Calu3 (cell line): ENCODE measurements at regions of chrX and their contacts with region 1.

Region 1: DNA sequence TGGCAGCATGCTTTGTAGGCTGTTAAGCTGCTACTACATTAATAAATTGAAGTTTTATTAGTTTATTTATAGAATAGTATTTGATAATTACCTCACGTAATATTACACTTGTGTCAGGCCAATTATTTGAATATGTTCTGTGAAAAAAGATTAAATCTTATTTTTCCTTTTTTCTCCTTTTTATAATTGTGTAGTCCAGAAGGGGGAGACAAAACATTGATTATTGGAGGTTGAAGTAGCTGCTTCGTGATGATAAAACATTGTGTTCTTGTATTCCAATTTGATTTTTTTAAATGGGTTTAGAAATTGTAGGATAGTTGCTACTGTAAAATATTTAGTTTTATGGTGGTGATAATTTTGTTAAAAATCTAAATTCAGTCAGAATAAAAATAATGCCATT is 85.7 kb downstream of the DIAPH2 start:
- DNase-seq: no peak
- H3K4me3 Mint-ChIP-seq: no peak overlapping the region
- H3K27ac Mint-ChIP-seq: no peak overlapping the region
- H3K4me1 Mint-ChIP-seq: no peaks in the 10 kb centered on the region
- H3K27me3 Mint-ChIP-seq: no peaks in the 10 kb centered on the region
- CTCF ChIP-seq: peak; percentile 16

Region 2: DNA sequence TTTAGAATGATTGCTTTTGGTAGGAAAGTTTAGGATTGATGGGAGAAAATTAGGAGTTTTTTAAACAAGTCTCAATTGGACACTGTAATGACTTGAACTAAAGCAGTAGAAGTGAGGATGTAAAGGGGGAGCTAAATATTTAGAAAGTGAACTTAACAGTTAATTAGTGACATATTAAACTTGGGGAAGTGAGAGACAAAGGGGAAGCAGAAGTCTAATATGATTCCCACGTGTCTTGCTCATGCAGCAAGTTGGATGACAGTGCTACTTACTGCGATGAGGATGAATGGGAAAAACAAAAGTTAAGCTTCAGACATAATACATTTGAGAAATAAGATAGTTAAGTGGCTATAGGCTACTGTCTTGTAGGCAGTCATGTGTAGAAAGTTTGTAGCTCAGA is 223.8 kb after region 1 on chrX:
- CTCF ChIA-PET with region 1: no interaction called
- intact Hi-C with region 1: loop called (anchors 10 kb)
- DNase-seq: no peak
- H3K4me3 Mint-ChIP-seq: no peak overlapping the region
- H3K27ac Mint-ChIP-seq: no peak overlapping the region
- H3K4me1 Mint-ChIP-seq: peaks cover 19% of the 10 kb centered on the region
- H3K27me3 Mint-ChIP-seq: no peaks in the 10 kb centered on the region
- CTCF ChIP-seq: no peak

Region 3: GRCh38 chrX:97016106-97016505 is 245.8 kb after region 1 on chrX:
- CTCF ChIA-PET with region 1: no interaction called
- intact Hi-C with region 1: loop called (anchors 5 kb)
- DNase-seq: no peak
- H3K4me3 Mint-ChIP-seq: no peak overlapping the region
- H3K27ac Mint-ChIP-seq: no peak overlapping the region
- H3K4me1 Mint-ChIP-seq: no peaks in the 10 kb centered on the region
- H3K27me3 Mint-ChIP-seq: no peaks in the 10 kb centered on the region
- CTCF ChIP-seq: no peak

Region 4: GRCh38 chrX:97685753-97686152 is 915.4 kb after region 1 on chrX:
- CTCF ChIA-PET with region 1: no interaction called
- intact Hi-C with region 1: loop called (anchors 2 kb)
- DNase-seq: peak; percentile 45
- H3K4me3 Mint-ChIP-seq: no peak overlapping the region
- H3K27ac Mint-ChIP-seq: no peak overlapping the region
- H3K4me1 Mint-ChIP-seq: no peaks in the 10 kb centered on the region
- H3K27me3 Mint-ChIP-seq: no peaks in the 10 kb centered on the region
- CTCF ChIP-seq: no peak